IMR-90 (cell line): ENCODE measurements at regions of chr4 and their contacts with region 1.

Region 1: GRCh38 chr4:123209436-123209835 is 187.2 kb upstream of the SPRY1 start:
- DNase-seq: no peak
- ATAC-seq: no peak
- H3K4me3 ChIP-seq: no peak overlapping the region
- H3K27ac ChIP-seq: no peak overlapping the region
- H3K4me1 ChIP-seq: peaks cover 3% of the 10 kb centered on the region; the same call in 1 of the 2 replicates
- H3K27me3 ChIP-seq: no peaks in the 10 kb centered on the region
- CTCF ChIP-seq: no peak
- POLR2A ChIP-seq: no peak
- RAD21 ChIP-seq: no peak

Region 2: GRCh38 chr4:122747883-122748282 is 461.6 kb before region 1 on chr4:
- CTCF ChIA-PET with region 1: no interaction called
- POLR2A ChIA-PET with region 1: no interaction called
- dilution Hi-C with region 1: no loop called
- in situ Hi-C with region 1: no loop called
- intact Hi-C with region 1: no loop called
- DNase-seq: peak; percentile 91
- ATAC-seq: peak; percentile 90
- H3K4me3 ChIP-seq: no peak overlapping the region
- H3K27ac ChIP-seq: no peak overlapping the region
- H3K4me1 ChIP-seq: peaks cover 3% of the 10 kb centered on the region; the same call in 1 of the 2 replicates
- H3K27me3 ChIP-seq: no peaks in the 10 kb centered on the region
- CTCF ChIP-seq: no peak
- POLR2A ChIP-seq: no peak
- RAD21 ChIP-seq: no peak

Region 3: DNA sequence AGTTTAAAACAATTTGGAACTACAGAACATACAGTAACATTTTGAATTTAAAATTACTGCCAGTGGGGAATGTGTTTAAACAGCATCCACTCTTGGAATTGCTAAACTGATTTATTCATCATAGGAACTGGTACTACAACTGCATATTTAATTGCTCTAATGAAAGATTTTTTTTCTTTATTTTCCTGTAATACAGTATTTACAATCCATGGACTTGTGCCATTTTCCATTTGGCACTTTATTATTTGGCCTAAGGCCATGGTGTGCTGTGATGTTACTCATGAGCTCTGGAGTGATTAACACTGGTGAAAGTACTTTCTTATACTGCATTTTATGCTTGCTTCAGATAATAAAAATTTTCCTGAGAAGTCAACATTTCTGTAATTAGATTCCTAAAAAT is 217.4 kb before region 1 on chr4:
- CTCF ChIA-PET with region 1: no interaction called
- POLR2A ChIA-PET with region 1: no interaction called
- dilution Hi-C with region 1: no loop called
- in situ Hi-C with region 1: no loop called
- intact Hi-C with region 1: no loop called
- DNase-seq: no peak
- ATAC-seq: no peak
- H3K4me3 ChIP-seq: no peak overlapping the region
- H3K27ac ChIP-seq: no peak overlapping the region
- H3K4me1 ChIP-seq: no peaks in the 10 kb centered on the region
- H3K27me3 ChIP-seq: no peaks in the 10 kb centered on the region
- CTCF ChIP-seq: no peak
- POLR2A ChIP-seq: no peak
- RAD21 ChIP-seq: no peak

Region 4: GRCh38 chr4:124499261-124499660 is 1289.8 kb after region 1 on chr4:
- CTCF ChIA-PET with region 1: no interaction called
- POLR2A ChIA-PET with region 1: interaction called, 10 read pairs
- dilution Hi-C with region 1: no loop called
- in situ Hi-C with region 1: no loop called
- intact Hi-C with region 1: no loop called
- DNase-seq: no peak
- ATAC-seq: no peak
- H3K4me3 ChIP-seq: no peak overlapping the region
- H3K27ac ChIP-seq: no peak overlapping the region
- H3K4me1 ChIP-seq: peaks cover 2% of the 10 kb centered on the region; the same call in 1 of the 2 replicates
- H3K27me3 ChIP-seq: no peaks in the 10 kb centered on the region
- CTCF ChIP-seq: no peak
- POLR2A ChIP-seq: no peak
- RAD21 ChIP-seq: no peak